ENCODE measurements at regions of chr1 and their contacts with region 1.

Region 1: GRCh38 chr1:246699095-246699735 is 25.0 kb upstream of the SCCPDH start:
- DNase-seq: peak; percentile 65 to 93 (median 84)

Region 2: GRCh38 chr1:246506674-246507481 is 192.3 kb before region 1 on chr1 and contains the start of gene SMYD3:
- intact Hi-C with region 1: loop called (anchors 10 kb)
- DNase-seq: peak; percentile 33 to 88 (median 78)

Region 3: GRCh38 chr1:246632281-246633087 is 66.7 kb before region 1 on chr1:
- intact Hi-C with region 1: no loop called
- DNase-seq: no peak

Region 4: DNA sequence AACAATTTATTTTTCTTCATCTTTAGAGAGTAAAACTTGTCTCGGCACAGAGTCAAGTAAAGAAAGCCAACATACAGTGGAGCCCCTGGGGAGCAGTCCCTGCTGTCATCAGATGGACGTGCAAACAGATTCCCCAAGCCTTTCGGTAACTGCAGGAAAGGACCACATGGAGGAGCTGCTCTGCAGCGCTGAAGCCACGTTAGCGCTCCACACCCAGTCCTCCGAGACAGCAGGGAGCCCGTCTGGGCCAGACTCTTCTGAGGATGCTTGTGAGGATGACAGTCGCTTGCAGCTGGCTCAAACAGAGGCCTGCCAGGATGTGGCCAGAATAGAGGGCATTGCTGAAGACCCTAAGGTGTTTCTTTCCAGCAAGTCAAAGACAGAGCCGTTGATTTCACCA is 52.1 kb before region 1 on chr1:
- intact Hi-C with region 1: loop called (anchors 5 kb)
- DNase-seq: peak; percentile 43 to 86 (median 70)

Region 5: DNA sequence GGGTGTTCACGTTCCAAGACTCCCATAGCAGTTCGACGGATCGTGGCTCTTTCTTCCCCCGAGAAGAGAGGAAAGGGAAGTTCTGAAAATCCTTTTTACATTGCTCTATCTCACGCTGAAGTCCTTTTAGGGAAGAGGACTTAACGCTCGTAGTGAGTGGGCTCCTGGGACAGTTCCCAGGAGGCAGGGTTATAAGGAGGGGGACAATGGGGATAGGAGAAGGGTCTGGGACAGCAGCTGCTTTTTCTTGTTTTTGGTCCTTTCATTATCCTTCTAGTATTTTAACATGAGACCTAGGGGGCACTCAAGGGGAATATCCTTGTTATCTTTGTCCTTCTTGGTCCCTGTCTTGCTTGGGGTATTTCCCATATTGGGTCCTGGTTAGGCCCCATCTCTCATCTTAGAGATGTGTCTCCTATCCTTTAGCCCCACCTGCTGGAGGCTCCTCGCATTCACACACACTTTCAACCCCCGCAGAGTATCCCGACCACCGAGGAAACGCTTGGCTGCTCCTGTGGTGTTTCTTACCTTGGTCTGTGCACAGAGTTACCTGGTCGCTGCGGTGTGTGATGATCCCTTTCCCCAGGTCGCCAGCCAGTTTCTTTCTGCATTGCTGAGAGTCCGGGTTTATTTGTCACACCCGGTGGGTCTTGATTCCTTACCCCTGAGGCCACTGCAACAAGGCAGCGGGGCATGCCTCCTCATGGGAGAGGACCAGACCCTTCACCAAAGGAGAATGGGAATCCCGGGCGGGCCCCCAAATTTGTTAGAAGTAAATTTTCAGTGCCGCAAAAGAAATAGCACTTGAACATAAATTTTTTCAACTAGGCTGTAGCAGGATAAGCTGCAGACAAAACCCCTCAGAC is 54.7 kb after region 1 on chr1:
- intact Hi-C with region 1: loop called (anchors 10 kb)
- DNase-seq: peak; percentile 9 to 87 (median 62)

Region 6: GRCh38 chr1:246875041-246876026 is 176.1 kb after region 1 on chr1:
- intact Hi-C with region 1: no loop called
- DNase-seq: no peak